ENCODE measurements at regions of chr20 and their contacts with region 1.

Region 1: DNA sequence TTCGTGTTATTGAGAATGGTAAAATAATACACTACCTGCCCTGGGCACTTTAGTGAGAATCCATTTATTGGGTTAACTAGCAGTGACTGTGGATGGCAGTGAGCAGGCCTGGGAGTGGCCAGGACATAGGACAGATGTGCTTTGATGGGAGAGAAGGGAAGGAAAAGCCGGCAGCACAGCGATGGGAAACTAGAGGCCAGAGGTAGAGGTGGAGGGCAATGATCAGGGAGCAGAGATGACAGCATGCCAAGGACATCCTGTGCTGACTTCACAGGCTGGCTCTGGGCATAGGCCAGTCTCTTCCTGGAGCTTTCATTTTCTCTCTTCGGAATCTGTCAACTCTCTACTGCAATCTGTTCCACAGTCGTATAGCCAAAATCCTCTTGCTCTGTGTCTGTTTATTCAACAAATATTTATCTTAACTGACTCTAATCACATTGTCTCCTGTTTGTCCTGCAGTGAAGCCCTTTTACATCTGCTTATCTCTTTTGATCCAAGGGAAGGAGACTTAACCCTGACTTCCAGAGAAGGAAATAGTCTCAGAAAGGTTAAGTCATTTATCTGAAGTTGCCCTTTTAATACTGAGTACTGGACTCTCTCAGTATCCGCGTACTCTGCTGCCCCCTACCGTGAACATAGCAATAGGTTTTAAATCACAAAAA is 18.4 kb upstream of the MMP24 start:
- DNase-seq: peak; percentile 59 to 90 (median 64)
- ATAC-seq: peak; percentile 98
- H3K4me3 ChIP-seq: no peak overlapping the region
- H3K27ac ChIP-seq: no peak overlapping the region
- H3K4me1 ChIP-seq: peaks cover 0 to 6% of the 10 kb centered on the region in 2 experiments; a peak in 2 of 5 replicates
- H3K27me3 ChIP-seq: no peaks in the 10 kb centered on the region
- CTCF ChIP-seq: peak; percentile 78 to 95 (median 79)
- EP300 ChIP-seq: peak; percentile 55
- POLR2A ChIP-seq: no peak
- RAD21 ChIP-seq: peak; percentile 98 to 99

Region 2: GRCh38 chr20:35079472-35080347 is 128.4 kb before region 1 on chr20:
- CTCF ChIA-PET with region 1: no interaction called
- POLR2A ChIA-PET with region 1: no interaction called
- in situ Hi-C with region 1: no loop called
- intact Hi-C with region 1: no loop called
- DNase-seq: no peak
- ATAC-seq: no peak
- H3K4me3 ChIP-seq: no peak overlapping the region
- H3K27ac ChIP-seq: no peak overlapping the region
- H3K4me1 ChIP-seq: no peaks in the 10 kb centered on the region; a peak in 2 of 5 replicates
- H3K27me3 ChIP-seq: no peaks in the 10 kb centered on the region
- CTCF ChIP-seq: no peak
- EP300 ChIP-seq: no peak
- POLR2A ChIP-seq: no peak
- RAD21 ChIP-seq: no peak

Region 3: DNA sequence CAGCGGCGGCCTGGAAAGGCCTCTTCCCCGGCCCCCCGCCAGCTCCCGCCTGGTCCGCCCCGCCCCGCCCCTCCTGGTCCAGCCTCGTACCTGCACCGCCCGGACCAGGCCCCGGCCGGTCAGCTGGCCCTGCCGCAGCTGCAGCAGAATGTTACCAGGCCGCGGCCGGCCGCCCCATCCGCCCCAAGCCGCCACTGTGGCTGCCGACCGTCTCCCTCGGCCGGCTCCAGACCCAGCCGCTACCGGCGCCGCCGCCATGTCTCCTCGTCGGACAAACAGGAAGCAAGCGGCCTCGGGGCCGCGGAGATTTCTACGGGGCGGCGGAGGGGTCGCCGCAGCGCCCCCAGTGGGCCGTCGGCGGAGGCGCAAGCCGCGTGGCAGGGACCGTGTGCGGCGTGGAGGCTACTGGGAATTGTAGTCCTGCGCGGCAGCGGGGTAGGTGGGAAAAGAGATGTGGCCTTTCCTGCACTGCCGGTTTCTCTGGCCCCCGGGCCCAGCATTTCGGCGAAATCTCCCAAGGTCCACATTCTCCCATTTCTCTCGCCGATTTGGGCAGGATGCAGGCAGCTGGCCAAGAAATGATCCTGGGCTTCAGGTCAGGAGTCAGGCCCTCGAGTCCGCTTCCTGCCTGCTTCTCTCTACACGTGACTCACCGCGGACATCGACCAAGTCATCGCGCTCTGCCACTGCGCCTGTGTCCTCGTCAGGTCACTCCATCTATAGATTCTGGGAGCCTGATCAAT is 115.4 kb before region 1 on chr20 and contains the start of gene TRPC4AP:
- CTCF ChIA-PET with region 1: interaction called, 13 read pairs
- POLR2A ChIA-PET with region 1: interaction called, 3 read pairs
- in situ Hi-C with region 1: no loop called
- intact Hi-C with region 1: loop called (anchors 1 kb)
- DNase-seq: peak; percentile 88 to 94 (median 88)
- ATAC-seq: peak; percentile 92
- H3K4me3 ChIP-seq: peak within 1 kb of the TSS; percentile 92
- H3K27ac ChIP-seq: peak within 1 kb of the TSS; percentile 93
- H3K4me1 ChIP-seq: peaks cover 15 to 18% of the 10 kb centered on the region in 2 experiments
- H3K27me3 ChIP-seq: no peaks in the 10 kb centered on the region
- CTCF ChIP-seq: peak; percentile 91 to 98 (median 96)
- EP300 ChIP-seq: peak; percentile 55
- POLR2A ChIP-seq: peak; percentile 88
- RAD21 ChIP-seq: peak; percentile 19 to 41; a peak in 1 of 4 replicates
- polyA plus RNA-seq, gene TRPC4AP: 2.3 to 3.6 TPM

Region 4: GRCh38 chr20:35269055-35269781 is 61.1 kb after region 1 on chr20:
- CTCF ChIA-PET with region 1: interaction called, 5 read pairs
- POLR2A ChIA-PET with region 1: no interaction called
- in situ Hi-C with region 1: no loop called
- intact Hi-C with region 1: loop called (anchors 1 kb)
- DNase-seq: peak; percentile 80 to 83 (median 82)
- ATAC-seq: peak; percentile 86
- H3K4me3 ChIP-seq: no peak overlapping the region
- H3K27ac ChIP-seq: no peak overlapping the region
- H3K4me1 ChIP-seq: peaks cover 8 to 33% of the 10 kb centered on the region in 2 experiments; a peak in 4 of 5 replicates
- H3K27me3 ChIP-seq: no peaks in the 10 kb centered on the region
- CTCF ChIP-seq: peak; percentile 85 to 93 (median 90)
- EP300 ChIP-seq: no peak
- POLR2A ChIP-seq: no peak
- RAD21 ChIP-seq: peak; percentile 61 to 83

Region 5: GRCh38 chr20:35711588-35712209 is 503.6 kb after region 1 on chr20:
- CTCF ChIA-PET with region 1: no interaction called
- POLR2A ChIA-PET with region 1: no interaction called
- in situ Hi-C with region 1: no loop called
- intact Hi-C with region 1: no loop called
- DNase-seq: no peak
- ATAC-seq: no peak
- H3K4me3 ChIP-seq: no peak overlapping the region
- H3K27ac ChIP-seq: no peak overlapping the region
- H3K4me1 ChIP-seq: no peaks in the 10 kb centered on the region
- H3K27me3 ChIP-seq: no peaks in the 10 kb centered on the region
- CTCF ChIP-seq: no peak
- EP300 ChIP-seq: no peak
- POLR2A ChIP-seq: peak; percentile 21; the same call in 1 of the 2 replicates
- RAD21 ChIP-seq: no peak

Measured in K562 (cell line).